Activated naive CD4-positive, alpha-beta T cell treated with anti-CD3 and anti-CD28 coated beads, Interleukin-2, amount 10 ng/mL, durations not matched to agents 7 days and 5 days (primary cell): ENCODE measurements at regions of chr16 and their contacts with region 1.

Region 1: DNA sequence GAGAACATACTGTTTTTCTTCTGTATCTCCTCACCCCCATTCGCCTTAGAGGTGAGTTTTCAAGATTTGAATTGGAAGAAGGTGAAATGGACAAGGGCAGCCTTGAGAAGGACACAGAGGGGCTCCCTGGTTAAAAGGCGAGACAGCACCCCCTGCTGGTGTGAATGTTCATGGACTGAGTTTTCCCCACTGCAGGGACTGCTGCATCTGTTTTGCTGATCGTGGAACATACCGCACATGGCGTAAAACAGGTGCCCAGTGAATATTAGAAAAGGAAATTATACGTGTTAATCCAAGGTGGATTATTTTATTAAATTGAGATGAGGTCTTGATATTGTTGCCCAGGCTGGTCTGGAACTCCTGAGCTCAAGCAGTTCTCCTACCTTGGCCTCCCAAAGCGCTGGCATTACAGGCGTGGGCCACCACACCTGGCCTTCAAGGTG is 54.5 kb downstream of the NDE1 start:
- DNase-seq: peak; percentile 83
- H3K4me3 Mint-ChIP-seq: no peak overlapping the region
- H3K27ac Mint-ChIP-seq: no peak overlapping the region
- H3K4me1 Mint-ChIP-seq: peaks cover 15% of the 10 kb centered on the region
- H3K27me3 Mint-ChIP-seq: no peaks in the 10 kb centered on the region

Region 2: GRCh38 chr16:15427648-15428239 is 276.8 kb before region 1 on chr16:
- CTCF ChIA-PET with region 1: interaction called, 11 read pairs
- DNase-seq: peak; percentile 66
- H3K4me3 Mint-ChIP-seq: no peak overlapping the region
- H3K27ac Mint-ChIP-seq: no peak overlapping the region
- H3K4me1 Mint-ChIP-seq: peaks cover 2% of the 10 kb centered on the region
- H3K27me3 Mint-ChIP-seq: peaks cover 7% of the 10 kb centered on the region